Activated T-helper 2 cell treated with anti-CD3 and anti-CD28 coated beads, Interferon-gamma antibody, Interleukin-2, Interleukin-4, amounts not matched to agents 10 μg/mL and 5 μg/mL and 100 μg/mL, durations not matched to agents 14 hours and 24 hours and 36 hours (primary cell): ENCODE measurements at regions of chr2 and their contacts with region 1.

Region 1: GRCh38 chr2:12501469-12502158 is 215.1 kb upstream of the TRIB2 start:
- DNase-seq: peak; percentile 82
- H3K4me3 Mint-ChIP-seq: peak overlapping the region; percentile 34
- H3K27ac Mint-ChIP-seq: peak overlapping the region; percentile 76
- H3K4me1 Mint-ChIP-seq: peaks cover 87% of the 10 kb centered on the region
- H3K27me3 Mint-ChIP-seq: no peaks in the 10 kb centered on the region

Region 2: GRCh38 chr2:11753886-11754699 is 747.5 kb before region 1 on chr2:
- intact Hi-C with region 1: loop called (anchors 5 kb)
- DNase-seq: peak; percentile 52
- H3K4me3 Mint-ChIP-seq: peak overlapping the region; percentile 74
- H3K27ac Mint-ChIP-seq: peak overlapping the region; percentile 93
- H3K4me1 Mint-ChIP-seq: peaks cover 75% of the 10 kb centered on the region
- H3K27me3 Mint-ChIP-seq: no peaks in the 10 kb centered on the region

Region 3: GRCh38 chr2:12430407-12431133 is 71.0 kb before region 1 on chr2:
- intact Hi-C with region 1: loop called (anchors 1 kb)
- DNase-seq: no peak
- H3K4me3 Mint-ChIP-seq: peak overlapping the region; percentile 18
- H3K27ac Mint-ChIP-seq: peak overlapping the region; percentile 63
- H3K4me1 Mint-ChIP-seq: peaks cover 29% of the 10 kb centered on the region
- H3K27me3 Mint-ChIP-seq: no peaks in the 10 kb centered on the region

Region 4: DNA sequence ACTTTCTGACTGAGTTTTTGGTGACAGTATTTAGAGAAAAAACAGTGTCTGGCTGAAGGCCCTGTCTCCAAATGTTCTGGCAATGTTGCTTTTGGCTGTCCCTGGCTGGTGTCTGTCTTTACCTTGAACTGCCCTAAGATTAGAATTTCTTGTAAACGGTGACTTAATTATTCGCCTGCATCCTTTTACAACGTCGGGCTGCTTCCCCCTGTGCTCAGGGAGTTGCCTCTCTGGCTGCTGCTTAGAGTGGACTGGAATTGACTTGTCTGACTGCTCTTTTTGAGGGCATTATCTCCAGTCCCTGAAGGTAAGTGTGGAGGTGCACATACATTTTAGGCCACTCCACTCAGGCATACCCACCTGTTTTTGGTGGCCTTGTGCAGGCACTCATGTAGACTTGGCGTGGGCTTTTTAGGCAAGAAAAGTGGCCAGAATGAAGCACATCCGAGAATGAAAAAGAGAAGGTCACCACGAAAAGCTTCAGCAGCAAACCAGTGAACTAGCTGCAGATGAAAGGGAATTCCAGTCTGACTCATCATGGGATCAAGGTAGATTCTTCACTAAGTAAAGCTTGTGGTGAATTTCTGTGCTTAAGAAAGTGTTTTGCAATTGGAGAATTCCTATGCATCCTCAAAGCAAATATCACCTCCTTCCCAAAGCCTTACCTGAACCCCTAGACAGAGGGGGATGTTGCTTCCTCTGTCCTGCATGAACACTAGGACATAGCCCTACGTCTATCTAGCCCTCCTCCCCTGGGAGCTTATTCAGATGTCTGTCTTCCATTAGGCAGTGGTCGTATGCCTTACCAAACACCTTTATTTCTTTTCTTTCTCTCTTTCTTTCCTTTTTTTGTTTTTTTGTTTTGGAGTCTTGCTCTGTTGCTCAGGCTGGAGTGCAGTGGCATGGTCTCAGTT is 15.2 kb before region 1 on chr2:
- intact Hi-C with region 1: loop called (anchors 2 kb)
- DNase-seq: no peak
- H3K4me3 Mint-ChIP-seq: no peak overlapping the region
- H3K27ac Mint-ChIP-seq: no peak overlapping the region
- H3K4me1 Mint-ChIP-seq: peaks cover 53% of the 10 kb centered on the region
- H3K27me3 Mint-ChIP-seq: no peaks in the 10 kb centered on the region

Region 5: GRCh38 chr2:12555012-12555645 is 53.5 kb after region 1 on chr2:
- intact Hi-C with region 1: loop called (anchors 1 kb)
- DNase-seq: no peak
- H3K4me3 Mint-ChIP-seq: peak overlapping the region; percentile 14
- H3K27ac Mint-ChIP-seq: peak overlapping the region; percentile 85
- H3K4me1 Mint-ChIP-seq: peaks cover 42% of the 10 kb centered on the region
- H3K27me3 Mint-ChIP-seq: no peaks in the 10 kb centered on the region

Region 6: DNA sequence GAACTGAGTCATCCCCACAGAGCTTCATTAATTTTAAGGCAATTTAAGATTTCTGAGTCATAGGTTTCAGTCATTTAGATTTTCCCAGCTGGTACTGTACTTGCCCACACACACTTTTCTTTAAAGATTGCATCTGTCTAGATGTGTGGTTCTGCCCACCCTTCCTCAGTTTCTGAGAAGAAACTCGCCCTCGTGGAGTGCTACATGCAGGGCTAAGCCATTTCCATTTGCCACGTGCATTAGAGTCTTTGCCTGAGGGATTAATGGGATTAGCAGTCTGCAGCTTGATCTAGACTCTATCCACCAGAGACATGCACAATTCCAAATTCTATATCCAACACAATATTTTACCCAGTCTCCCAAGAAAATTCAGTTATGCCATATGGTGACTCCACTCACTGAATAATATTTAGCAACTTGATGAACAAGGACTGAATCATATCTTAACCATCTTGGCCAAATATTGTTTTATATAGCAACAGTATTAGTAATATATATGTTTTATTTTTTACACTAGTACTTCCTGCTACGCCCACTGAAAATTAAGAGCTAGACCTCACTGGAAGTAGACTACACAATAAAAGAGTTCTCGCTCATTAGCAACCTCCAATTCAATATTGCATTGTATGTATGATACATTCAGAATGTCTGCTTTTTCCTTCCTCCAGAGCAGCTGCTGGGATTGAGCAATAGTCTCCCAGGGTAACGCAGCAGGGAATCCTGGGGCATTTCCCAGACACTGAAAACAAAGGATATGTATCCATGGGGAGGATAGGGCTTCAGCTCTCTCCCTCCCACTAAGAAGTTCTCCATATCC is 200.9 kb after region 1 on chr2:
- intact Hi-C with region 1: loop called (anchors 5 kb)
- DNase-seq: no peak
- H3K4me3 Mint-ChIP-seq: no peak overlapping the region
- H3K27ac Mint-ChIP-seq: no peak overlapping the region
- H3K4me1 Mint-ChIP-seq: peaks cover 27% of the 10 kb centered on the region
- H3K27me3 Mint-ChIP-seq: peaks cover 36% of the 10 kb centered on the region

Region 7: GRCh38 chr2:12931186-12931844 is 429.7 kb after region 1 on chr2:
- intact Hi-C with region 1: loop called (anchors 5 kb)
- DNase-seq: no peak
- H3K4me3 Mint-ChIP-seq: no peak overlapping the region
- H3K27ac Mint-ChIP-seq: no peak overlapping the region
- H3K4me1 Mint-ChIP-seq: peaks cover 12% of the 10 kb centered on the region
- H3K27me3 Mint-ChIP-seq: peaks cover 47% of the 10 kb centered on the region